AG04450 (cell line): ENCODE measurements at regions of chr4 and their contacts with region 1.

Region 1: DNA sequence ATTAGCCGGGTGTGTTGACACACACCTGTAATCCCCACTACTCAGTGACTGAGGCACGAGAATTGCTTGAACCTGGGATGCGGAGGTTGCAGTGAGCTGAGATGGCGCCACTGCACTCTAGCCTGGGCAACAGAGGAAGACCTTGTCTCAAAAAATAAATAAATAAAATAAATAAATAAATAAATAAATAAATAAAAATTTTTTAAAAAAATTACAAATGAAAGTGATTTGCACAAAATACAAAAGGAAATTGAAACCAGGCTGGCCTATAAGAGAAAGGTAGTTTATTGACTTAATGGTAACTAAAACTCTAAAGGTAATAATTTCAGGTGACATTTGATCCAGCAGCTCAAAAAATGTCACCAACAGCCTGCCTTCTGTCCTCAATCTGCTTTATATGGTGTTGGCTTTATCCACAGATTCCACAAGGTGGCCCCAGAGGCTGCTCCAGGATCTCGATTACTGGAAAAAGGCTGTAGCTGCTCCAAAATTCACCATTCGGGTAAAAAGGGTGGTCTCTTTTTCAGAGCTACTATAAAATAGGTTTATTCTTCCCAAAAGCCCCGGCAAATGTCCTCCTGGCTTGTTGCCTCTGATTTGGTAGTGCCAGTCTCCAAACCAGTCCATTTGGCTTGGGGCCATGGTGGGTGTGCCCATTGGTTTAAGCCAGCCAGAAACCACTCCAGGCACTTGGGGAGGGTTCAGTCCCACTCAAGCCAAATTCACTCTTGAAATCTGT is 61.4 kb upstream of the TRIM2 start:
- DNase-seq: no peak
- H3K4me3 ChIP-seq: no peak overlapping the region
- H3K27ac ChIP-seq: no peak overlapping the region
- H3K27me3 ChIP-seq: peaks cover 2% of the 10 kb centered on the region
- CTCF ChIP-seq: peak; percentile 97

Region 2: DNA sequence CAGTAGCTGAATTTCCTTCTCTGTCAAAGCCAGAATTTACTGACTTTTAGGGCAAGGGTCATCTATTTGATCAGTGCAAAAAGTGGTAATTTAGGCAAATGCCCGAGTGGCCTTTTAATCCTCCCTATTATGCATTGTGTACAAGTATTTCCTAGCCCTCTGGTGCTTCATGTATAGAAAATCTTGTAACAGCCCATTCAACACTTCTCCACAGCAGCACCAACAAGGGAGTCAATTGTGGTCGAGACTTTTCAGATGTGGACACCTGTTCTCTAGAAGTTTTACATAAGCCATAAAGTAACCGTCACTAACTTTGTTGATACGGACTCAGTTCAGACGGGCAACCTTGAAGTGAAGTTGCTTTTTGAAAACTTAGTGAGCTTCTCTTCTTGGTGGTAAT is 257.7 kb before region 1 on chr4:
- CTCF ChIA-PET with region 1: no interaction called
- POLR2A ChIA-PET with region 1: no interaction called
- DNase-seq: no peak
- H3K4me3 ChIP-seq: no peak overlapping the region
- H3K27ac ChIP-seq: no peak overlapping the region
- H3K27me3 ChIP-seq: no peaks in the 10 kb centered on the region
- CTCF ChIP-seq: no peak

Region 3: GRCh38 chr4:152935143-152935542 is 207.7 kb before region 1 on chr4:
- CTCF ChIA-PET with region 1: no interaction called
- POLR2A ChIA-PET with region 1: no interaction called
- DNase-seq: no peak
- H3K4me3 ChIP-seq: no peak overlapping the region
- H3K27ac ChIP-seq: no peak overlapping the region
- H3K27me3 ChIP-seq: peaks cover 59% of the 10 kb centered on the region
- CTCF ChIP-seq: no peak

Region 4: GRCh38 chr4:153153339-153153871 is 10.5 kb after region 1 on chr4:
- CTCF ChIA-PET with region 1: interaction called, 16 read pairs
- POLR2A ChIA-PET with region 1: no interaction called
- DNase-seq: no peak
- H3K4me3 ChIP-seq: peak overlapping the region; percentile 66
- H3K27ac ChIP-seq: no peak overlapping the region
- H3K27me3 ChIP-seq: peaks cover 18% of the 10 kb centered on the region
- CTCF ChIP-seq: no peak; the same call in 1 of the 2 replicates

Region 5: GRCh38 chr4:153310793-153311192 is 167.9 kb after region 1 on chr4:
- CTCF ChIA-PET with region 1: interaction called, 67 read pairs
- POLR2A ChIA-PET with region 1: no interaction called
- DNase-seq: no peak
- H3K4me3 ChIP-seq: no peak overlapping the region
- H3K27ac ChIP-seq: no peak overlapping the region
- H3K27me3 ChIP-seq: no peaks in the 10 kb centered on the region
- CTCF ChIP-seq: no peak

Region 6: GRCh38 chr4:153335665-153336064 is 192.8 kb after region 1 on chr4:
- CTCF ChIA-PET with region 1: interaction called, 34 read pairs
- POLR2A ChIA-PET with region 1: no interaction called
- DNase-seq: no peak
- H3K4me3 ChIP-seq: no peak overlapping the region
- H3K27ac ChIP-seq: no peak overlapping the region
- H3K27me3 ChIP-seq: no peaks in the 10 kb centered on the region
- CTCF ChIP-seq: no peak

Region 7: DNA sequence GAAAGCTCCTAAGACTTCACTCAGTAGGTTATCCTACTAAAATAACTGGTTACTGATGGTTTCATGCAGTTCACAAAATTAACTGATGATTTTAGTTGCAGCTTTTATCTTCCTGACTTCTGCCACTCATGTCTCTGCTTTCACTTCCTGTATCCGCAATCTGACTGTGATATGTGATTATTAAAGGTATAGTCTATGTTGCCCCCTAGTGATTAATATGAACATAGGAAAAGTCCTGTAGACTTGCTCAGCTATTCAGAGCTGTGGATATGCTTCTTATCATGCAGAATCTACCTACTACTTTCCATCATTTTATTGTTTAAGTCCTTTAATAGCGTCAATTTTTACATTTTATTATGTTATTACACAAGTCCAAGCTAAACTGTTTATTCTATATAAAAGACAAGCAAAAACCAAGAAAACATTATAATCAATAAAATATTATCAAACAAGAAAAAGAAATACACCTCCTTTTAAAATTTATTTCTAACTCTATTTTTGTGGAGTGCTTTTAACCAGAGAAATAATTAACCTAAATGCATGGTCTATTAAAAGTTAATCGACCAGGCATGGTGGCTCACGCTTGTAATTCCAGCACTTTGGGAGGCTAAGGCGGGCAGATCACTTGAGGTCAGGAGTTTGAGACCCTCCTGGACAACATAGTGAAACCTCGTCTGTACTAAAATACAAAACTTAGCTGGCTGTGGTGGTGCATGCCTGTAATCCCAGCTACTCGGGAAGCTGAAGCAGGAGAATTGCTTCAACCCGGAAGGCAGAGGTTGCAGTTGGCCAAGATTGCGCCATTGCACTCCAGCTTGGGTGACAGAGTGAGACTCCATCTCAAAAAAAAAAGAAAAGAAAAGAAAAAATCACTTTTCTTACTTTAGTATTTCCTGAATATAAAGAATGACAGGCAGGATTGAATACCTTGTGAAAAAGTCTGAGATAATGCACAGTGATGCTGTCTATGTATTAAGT is 500.8 kb after region 1 on chr4:
- CTCF ChIA-PET with region 1: interaction called, 26 read pairs
- POLR2A ChIA-PET with region 1: no interaction called
- DNase-seq: no peak
- H3K4me3 ChIP-seq: no peak overlapping the region
- H3K27ac ChIP-seq: no peak overlapping the region
- H3K27me3 ChIP-seq: no peaks in the 10 kb centered on the region
- CTCF ChIP-seq: peak; percentile 61